Caco-2 (cell line): ENCODE measurements at regions of chr1 and their contacts with region 1.

Region 1: DNA sequence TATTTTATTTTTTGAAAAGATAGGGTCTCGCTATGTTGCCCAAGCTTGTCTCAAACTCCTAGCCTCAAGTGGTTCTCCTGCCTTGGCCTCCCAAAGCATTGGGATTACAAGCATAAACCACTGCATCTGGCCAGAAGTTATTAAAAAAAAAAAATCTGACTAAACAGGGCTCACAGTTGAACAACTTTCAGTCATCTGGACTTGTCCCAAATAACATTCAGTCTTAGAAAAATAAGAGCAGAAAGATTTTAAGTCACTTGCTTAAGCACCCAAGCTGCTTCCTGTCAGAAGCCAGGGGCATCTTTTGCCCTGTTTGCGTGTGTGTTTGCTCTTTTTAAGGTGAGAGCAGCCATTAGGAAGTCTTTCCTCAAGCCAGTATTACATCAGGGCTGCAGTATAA is 286.8 kb downstream of the LMO4 start:
- DNase-seq: no peak
- H3K4me3 ChIP-seq: no peak overlapping the region
- H3K4me3 Mint-ChIP-seq: no peak overlapping the region
- H3K27ac Mint-ChIP-seq: no peak overlapping the region
- H3K4me1 ChIP-seq: peaks cover 23% of the 10 kb centered on the region
- H3K4me1 Mint-ChIP-seq: peaks cover 20% of the 10 kb centered on the region
- H3K27me3 ChIP-seq: no peaks in the 10 kb centered on the region
- H3K27me3 Mint-ChIP-seq: no peaks in the 10 kb centered on the region
- CTCF ChIP-seq: no peak

Region 2: GRCh38 chr1:87328272-87329050 is 287.0 kb before region 1 on chr1 and contains the start of gene LMO4:
- CTCF ChIA-PET with region 1: no interaction called
- POLR2A ChIA-PET with region 1: no interaction called
- intact Hi-C with region 1: loop called (anchors 5 kb)
- DNase-seq: peak; percentile 92 to 95
- H3K4me3 ChIP-seq: peak within 1 kb of the TSS; percentile 62
- H3K4me3 Mint-ChIP-seq: peak within 1 kb of the TSS; percentile 94
- H3K27ac Mint-ChIP-seq: peak within 1 kb of the TSS; percentile 87
- H3K4me1 ChIP-seq: 0 out of 2 replicates have a peak, but pooled peaks cover 4% of the 10 kb centered on the region
- H3K4me1 Mint-ChIP-seq: no peaks in the 10 kb centered on the region
- H3K27me3 ChIP-seq: no peaks in the 10 kb centered on the region
- H3K27me3 Mint-ChIP-seq: no peaks in the 10 kb centered on the region
- CTCF ChIP-seq: no peak
- total RNA-seq, gene LMO4: 50.4 and 53.8 TPM in 2 replicates

Region 3: GRCh38 chr1:87575528-87575927 is 40.0 kb before region 1 on chr1:
- CTCF ChIA-PET with region 1: no interaction called
- POLR2A ChIA-PET with region 1: no interaction called
- intact Hi-C with region 1: no loop called
- DNase-seq: no peak
- H3K4me3 ChIP-seq: no peak overlapping the region
- H3K4me3 Mint-ChIP-seq: no peak overlapping the region
- H3K27ac Mint-ChIP-seq: no peak overlapping the region
- H3K4me1 ChIP-seq: no peaks in the 10 kb centered on the region
- H3K4me1 Mint-ChIP-seq: no peaks in the 10 kb centered on the region
- H3K27me3 ChIP-seq: no peaks in the 10 kb centered on the region
- H3K27me3 Mint-ChIP-seq: no peaks in the 10 kb centered on the region
- CTCF ChIP-seq: no peak

Region 4: DNA sequence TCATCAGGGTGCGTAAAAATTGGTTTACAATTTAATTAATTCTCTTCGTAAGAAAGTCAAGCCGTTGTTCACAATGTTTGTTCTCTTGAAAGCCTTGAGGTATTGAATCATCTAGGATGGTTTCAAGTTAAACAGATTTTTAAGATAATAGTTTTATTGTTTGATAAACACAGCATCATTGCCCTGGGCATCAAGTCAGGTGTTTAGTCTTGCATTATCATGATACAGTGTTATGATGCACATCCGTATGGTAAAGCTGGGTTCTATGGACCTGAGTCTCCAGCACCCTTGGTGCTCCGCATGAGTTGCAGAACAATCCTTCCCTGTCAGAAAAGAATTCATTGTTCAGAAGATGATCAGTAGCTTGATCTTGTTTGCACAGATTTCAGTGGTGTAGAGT is 72.6 kb after region 1 on chr1:
- CTCF ChIA-PET with region 1: no interaction called
- POLR2A ChIA-PET with region 1: no interaction called
- intact Hi-C with region 1: loop called (anchors 2 kb)
- DNase-seq: no peak
- H3K4me3 ChIP-seq: no peak overlapping the region
- H3K4me3 Mint-ChIP-seq: no peak overlapping the region
- H3K27ac Mint-ChIP-seq: no peak overlapping the region
- H3K4me1 ChIP-seq: peaks cover 21% of the 10 kb centered on the region
- H3K4me1 Mint-ChIP-seq: peaks cover 9% of the 10 kb centered on the region
- H3K27me3 ChIP-seq: no peaks in the 10 kb centered on the region
- H3K27me3 Mint-ChIP-seq: no peaks in the 10 kb centered on the region
- CTCF ChIP-seq: no peak

Region 5: GRCh38 chr1:87787551-87787950 is 172.1 kb after region 1 on chr1:
- CTCF ChIA-PET with region 1: no interaction called
- POLR2A ChIA-PET with region 1: no interaction called
- intact Hi-C with region 1: loop called (anchors 1 kb)
- DNase-seq: peak; percentile 60 to 66
- H3K4me3 ChIP-seq: no peak overlapping the region
- H3K4me3 Mint-ChIP-seq: peak overlapping the region; percentile 58
- H3K27ac Mint-ChIP-seq: peak overlapping the region; percentile 85
- H3K4me1 ChIP-seq: peaks cover 60% of the 10 kb centered on the region
- H3K4me1 Mint-ChIP-seq: peaks cover 47% of the 10 kb centered on the region
- H3K27me3 ChIP-seq: no peaks in the 10 kb centered on the region
- H3K27me3 Mint-ChIP-seq: no peaks in the 10 kb centered on the region
- CTCF ChIP-seq: peak in 1 of 2 experiments; percentile 15

Region 6: DNA sequence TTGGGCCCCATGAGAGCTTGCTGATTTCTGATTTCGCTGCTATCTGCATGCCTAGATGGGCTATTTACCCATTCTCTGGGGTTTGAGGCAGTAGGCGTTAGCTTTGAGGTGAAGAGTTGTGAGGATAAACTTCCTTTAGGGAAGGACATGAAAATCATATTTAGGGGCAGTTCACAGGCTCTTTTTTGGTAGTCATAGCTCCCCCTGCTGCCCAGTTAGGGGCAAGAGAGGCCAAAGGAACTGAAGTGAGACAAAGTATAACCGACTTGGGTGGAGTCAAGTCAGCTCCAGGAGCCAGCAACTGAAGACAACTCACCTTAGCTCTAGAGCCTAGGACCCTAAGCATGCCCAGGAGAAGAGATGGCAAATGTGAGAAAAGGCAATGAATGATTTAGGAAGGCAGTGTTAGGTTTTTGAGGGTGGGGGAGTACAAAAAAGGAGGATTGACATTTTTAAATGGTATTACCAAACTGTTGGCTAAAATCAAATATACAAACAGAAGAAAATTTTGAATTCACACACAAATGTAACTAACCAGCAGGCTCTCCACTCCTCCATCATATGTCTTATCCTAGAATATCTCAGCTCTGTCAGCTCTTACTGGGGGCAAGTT is 338.3 kb after region 1 on chr1:
- CTCF ChIA-PET with region 1: no interaction called
- POLR2A ChIA-PET with region 1: no interaction called
- intact Hi-C with region 1: loop called (anchors 1 kb)
- DNase-seq: peak; percentile 53 to 69
- H3K4me3 ChIP-seq: no peak overlapping the region
- H3K4me3 Mint-ChIP-seq: no peak overlapping the region
- H3K27ac Mint-ChIP-seq: no peak overlapping the region
- H3K4me1 ChIP-seq: peaks cover 3% of the 10 kb centered on the region; the same call in 1 of the 2 replicates
- H3K4me1 Mint-ChIP-seq: peaks cover 4% of the 10 kb centered on the region
- H3K27me3 ChIP-seq: no peaks in the 10 kb centered on the region
- H3K27me3 Mint-ChIP-seq: no peaks in the 10 kb centered on the region
- CTCF ChIP-seq: peak; percentile 50 to 63

Region 7: DNA sequence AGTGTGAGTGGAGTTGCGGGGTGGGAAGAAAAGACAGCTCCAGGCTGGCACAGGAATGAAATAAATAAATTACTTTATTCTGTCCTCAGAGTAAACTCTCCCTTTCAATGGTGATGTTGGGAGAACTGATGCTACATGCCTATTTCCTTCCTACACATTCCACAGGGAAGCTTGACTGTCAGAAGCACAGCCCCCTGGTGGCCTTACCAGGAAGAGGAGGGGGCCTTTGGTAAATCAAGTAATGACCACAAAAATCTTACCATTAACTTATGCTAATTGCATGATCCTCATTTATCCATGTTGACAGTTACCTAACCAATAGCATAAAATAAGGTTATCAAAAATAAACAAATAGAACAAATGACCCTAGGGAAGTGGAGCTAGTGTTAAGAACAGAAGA is 463.5 kb after region 1 on chr1:
- CTCF ChIA-PET with region 1: no interaction called
- POLR2A ChIA-PET with region 1: no interaction called
- intact Hi-C with region 1: no loop called
- DNase-seq: peak; percentile 20 to 42
- H3K4me3 ChIP-seq: no peak overlapping the region
- H3K4me3 Mint-ChIP-seq: no peak overlapping the region
- H3K27ac Mint-ChIP-seq: no peak overlapping the region
- H3K4me1 ChIP-seq: no peaks in the 10 kb centered on the region
- H3K4me1 Mint-ChIP-seq: peaks cover 8% of the 10 kb centered on the region
- H3K27me3 ChIP-seq: no peaks in the 10 kb centered on the region
- H3K27me3 Mint-ChIP-seq: no peaks in the 10 kb centered on the region
- CTCF ChIP-seq: peak; percentile 26 to 62

Region 8: DNA sequence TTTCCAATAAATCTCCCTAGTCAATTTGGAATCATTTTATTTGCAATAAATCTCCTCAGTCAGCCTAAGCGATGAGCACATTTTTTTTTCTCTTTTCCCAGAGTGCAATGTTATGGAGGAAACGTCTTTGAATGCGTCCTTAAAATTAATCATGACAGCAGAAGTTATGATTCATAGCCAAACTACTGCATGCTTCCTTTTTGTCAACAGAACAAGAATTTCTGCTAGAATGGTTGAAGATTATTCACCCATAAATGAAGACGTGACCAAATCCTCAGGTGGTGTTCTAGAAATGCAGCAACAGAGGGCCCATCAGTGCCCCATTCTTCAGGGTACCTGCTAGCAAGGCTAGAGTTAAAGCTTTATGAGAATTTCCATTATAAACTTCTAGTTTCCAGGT is 660.7 kb after region 1 on chr1:
- CTCF ChIA-PET with region 1: no interaction called
- POLR2A ChIA-PET with region 1: no interaction called
- intact Hi-C with region 1: no loop called
- DNase-seq: no peak
- H3K4me3 ChIP-seq: no peak overlapping the region
- H3K4me3 Mint-ChIP-seq: no peak overlapping the region
- H3K27ac Mint-ChIP-seq: no peak overlapping the region
- H3K4me1 ChIP-seq: no peaks in the 10 kb centered on the region
- H3K4me1 Mint-ChIP-seq: no peaks in the 10 kb centered on the region
- H3K27me3 ChIP-seq: no peaks in the 10 kb centered on the region
- H3K27me3 Mint-ChIP-seq: peaks cover 3% of the 10 kb centered on the region
- CTCF ChIP-seq: no peak